A673 (cell line): ENCODE measurements at regions of chr14 and their contacts with region 1.

Region 1: GRCh38 chr14:54967496-54967895 is 59.4 kb downstream of the WDHD1 start:
- DNase-seq: no peak
- H3K4me3 ChIP-seq: no peak overlapping the region
- H3K27ac ChIP-seq: no peak overlapping the region
- H3K4me1 ChIP-seq: no peaks in the 10 kb centered on the region
- H3K27me3 ChIP-seq: no peaks in the 10 kb centered on the region
- CTCF ChIP-seq: no peak

Region 2: GRCh38 chr14:54672181-54672580 is 295.3 kb before region 1 on chr14:
- CTCF ChIA-PET with region 1: no interaction called
- POLR2A ChIA-PET with region 1: interaction called, 24 read pairs
- intact Hi-C with region 1: no loop called
- DNase-seq: no peak
- H3K4me3 ChIP-seq: no peak overlapping the region
- H3K27ac ChIP-seq: no peak overlapping the region
- H3K4me1 ChIP-seq: peaks cover 45% of the 10 kb centered on the region
- H3K27me3 ChIP-seq: no peaks in the 10 kb centered on the region
- CTCF ChIP-seq: no peak

Region 3: DNA sequence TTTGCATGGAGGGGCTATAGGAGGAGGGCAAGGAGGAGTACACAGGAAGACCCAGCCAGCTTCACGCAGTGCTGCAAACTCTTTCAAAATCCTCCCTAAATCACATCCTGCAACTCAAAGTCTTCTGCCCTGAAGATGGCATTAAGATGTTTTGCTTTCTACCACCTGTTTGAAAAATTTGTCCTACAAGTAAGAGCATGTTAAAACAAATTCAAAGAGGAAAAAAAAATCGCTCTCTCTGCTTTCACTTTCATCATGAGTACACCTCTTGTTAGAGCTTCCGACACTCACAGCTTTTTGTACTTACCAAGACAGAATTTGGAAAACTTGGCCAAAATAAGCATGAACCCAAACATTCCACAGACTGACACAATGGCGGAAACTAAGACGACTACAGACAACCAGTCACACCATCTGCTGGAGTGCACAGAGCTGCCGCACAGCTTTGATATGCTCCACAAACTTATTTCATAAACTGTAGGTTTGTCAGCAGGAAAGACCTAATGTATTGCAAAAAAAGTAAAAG is 86.2 kb before region 1 on chr14:
- CTCF ChIA-PET with region 1: no interaction called
- POLR2A ChIA-PET with region 1: no interaction called
- intact Hi-C with region 1: no loop called
- DNase-seq: no peak
- H3K4me3 ChIP-seq: peak overlapping the region; percentile 21
- H3K27ac ChIP-seq: peak overlapping the region; percentile 19
- H3K4me1 ChIP-seq: no peaks in the 10 kb centered on the region
- H3K27me3 ChIP-seq: no peaks in the 10 kb centered on the region
- CTCF ChIP-seq: no peak